ENCODE measurements at regions of chr7 and their contacts with region 1.

Region 1: GRCh38 chr7:78939669-78940068 is 513.8 kb downstream of the MAGI2 start:
- ATAC-seq: no peak
- H3K4me3 ChIP-seq: no peak overlapping the region
- H3K27ac ChIP-seq: no peak overlapping the region
- H3K4me1 ChIP-seq: no peaks in the 10 kb centered on the region

Region 2: GRCh38 chr7:78510580-78511188 is 429.0 kb before region 1 on chr7:
- in situ Hi-C with region 1: loop called in 1 of 9 experiments (anchors 25 kb)
- ATAC-seq: peak in 3 of 8 experiments; percentile 64 to 73 (median 69)
- H3K4me3 ChIP-seq: no peak overlapping the region
- H3K27ac ChIP-seq: no peak overlapping the region
- H3K4me1 ChIP-seq: peaks cover 8 to 14% of the 10 kb centered on the region in 2 donors

Region 3: DNA sequence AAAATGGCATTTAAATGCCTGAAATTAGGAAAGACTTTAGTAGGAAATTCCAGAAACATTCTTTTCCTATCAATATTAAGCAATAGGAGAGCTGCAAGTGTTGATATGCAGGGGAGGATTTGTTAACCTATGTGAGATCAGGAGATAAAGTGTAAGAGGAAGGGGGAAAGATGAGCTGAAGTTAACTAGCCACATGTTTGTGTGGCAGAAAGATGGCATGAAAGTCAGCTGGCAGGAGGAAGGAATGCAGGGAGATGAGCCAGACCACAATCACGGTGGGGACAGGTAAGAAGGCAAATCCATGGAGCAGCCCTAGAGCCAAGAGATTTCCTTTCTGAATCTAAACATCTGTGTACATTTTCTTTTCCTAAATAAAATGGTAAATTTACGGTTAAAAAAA is 210.2 kb after region 1 on chr7:
- in situ Hi-C with region 1: loop called in 1 of 9 experiments (anchors 25 kb)
- ATAC-seq: no peak
- H3K4me3 ChIP-seq: no peak overlapping the region
- H3K27ac ChIP-seq: no peak overlapping the region
- H3K4me1 ChIP-seq: no peaks in the 10 kb centered on the region